Activated naive CD4-positive, alpha-beta T cell treated with anti-CD3 and anti-CD28 coated beads, Interleukin-2, amount 10 ng/mL, durations not matched to agents 7 days and 5 days (primary cell): ENCODE measurements at regions of chr14 and their contacts with region 1.

Region 1: DNA sequence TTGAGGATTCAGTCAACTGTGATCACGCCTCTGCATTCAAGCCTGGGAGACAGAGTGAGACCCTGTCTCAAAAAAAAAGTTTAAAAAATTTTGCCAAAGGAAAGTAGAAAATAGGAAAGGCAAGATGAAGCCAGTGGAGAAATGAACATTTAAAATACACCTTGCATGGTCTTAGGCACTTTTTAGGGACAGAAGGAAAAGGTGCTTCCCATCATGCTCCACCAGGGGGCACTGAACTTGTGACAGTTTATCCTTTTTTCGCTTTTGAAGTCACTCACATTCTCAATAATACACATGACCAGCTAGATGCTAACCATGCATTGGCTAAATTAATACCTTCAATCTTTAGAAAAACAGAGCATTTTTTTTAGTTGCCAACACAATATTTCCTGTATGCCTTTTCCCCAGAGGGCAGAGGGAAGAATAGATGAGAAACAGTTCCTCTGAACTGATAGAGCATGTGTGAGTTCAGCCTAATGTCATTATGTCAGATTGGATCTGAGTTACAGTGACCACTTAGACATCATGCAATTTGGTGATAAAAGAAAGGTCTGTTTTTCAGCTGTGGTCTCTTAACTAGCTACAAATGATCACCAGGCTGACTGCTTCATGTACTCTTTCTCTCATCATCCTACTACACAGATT is 221.8 kb upstream of the SSTR1 start:
- DNase-seq: peak; percentile 65
- H3K4me3 Mint-ChIP-seq: no peak overlapping the region
- H3K27ac Mint-ChIP-seq: no peak overlapping the region
- H3K4me1 Mint-ChIP-seq: no peaks in the 10 kb centered on the region
- H3K27me3 Mint-ChIP-seq: no peaks in the 10 kb centered on the region

Region 2: GRCh38 chr14:38047195-38047902 is 61.4 kb after region 1 on chr14:
- CTCF ChIA-PET with region 1: no interaction called
- DNase-seq: no peak
- H3K4me3 Mint-ChIP-seq: no peak overlapping the region
- H3K27ac Mint-ChIP-seq: no peak overlapping the region
- H3K4me1 Mint-ChIP-seq: no peaks in the 10 kb centered on the region
- H3K27me3 Mint-ChIP-seq: no peaks in the 10 kb centered on the region

Region 3: GRCh38 chr14:38197001-38197783 is 211.2 kb after region 1 on chr14:
- CTCF ChIA-PET with region 1: interaction called, 15 read pairs
- DNase-seq: no peak
- H3K4me3 Mint-ChIP-seq: no peak overlapping the region
- H3K27ac Mint-ChIP-seq: no peak overlapping the region
- H3K4me1 Mint-ChIP-seq: no peaks in the 10 kb centered on the region
- H3K27me3 Mint-ChIP-seq: no peaks in the 10 kb centered on the region